Tibial artery (tissue), 4 donors: ENCODE measurements at regions of chr10 and their contacts with region 1.

Region 1: GRCh38 chr10:110269374-110270318 is 35.1 kb downstream of the SMNDC1 start:
- DNase-seq: peak in 1 of 2 donors; percentile 69
- H3K4me3 ChIP-seq: peak overlapping the region; percentile 4 to 27
- H3K27ac ChIP-seq: peak overlapping the region; percentile 74 to 85
- H3K4me1 ChIP-seq: peaks cover 0 to 100% (median 67%) of the 10 kb centered on the region in 4 donors
- H3K27me3 ChIP-seq: no peaks in the 10 kb centered on the region
- CTCF ChIP-seq: no peak

Region 2: GRCh38 chr10:110129490-110129889 is 140.2 kb before region 1 on chr10:
- intact Hi-C with region 1: no loop called
- DNase-seq: no peak
- H3K4me3 ChIP-seq: no peak overlapping the region
- H3K27ac ChIP-seq: no peak overlapping the region
- H3K4me1 ChIP-seq: no peaks in the 10 kb centered on the region
- H3K27me3 ChIP-seq: no peaks in the 10 kb centered on the region
- CTCF ChIP-seq: no peak

Region 3: DNA sequence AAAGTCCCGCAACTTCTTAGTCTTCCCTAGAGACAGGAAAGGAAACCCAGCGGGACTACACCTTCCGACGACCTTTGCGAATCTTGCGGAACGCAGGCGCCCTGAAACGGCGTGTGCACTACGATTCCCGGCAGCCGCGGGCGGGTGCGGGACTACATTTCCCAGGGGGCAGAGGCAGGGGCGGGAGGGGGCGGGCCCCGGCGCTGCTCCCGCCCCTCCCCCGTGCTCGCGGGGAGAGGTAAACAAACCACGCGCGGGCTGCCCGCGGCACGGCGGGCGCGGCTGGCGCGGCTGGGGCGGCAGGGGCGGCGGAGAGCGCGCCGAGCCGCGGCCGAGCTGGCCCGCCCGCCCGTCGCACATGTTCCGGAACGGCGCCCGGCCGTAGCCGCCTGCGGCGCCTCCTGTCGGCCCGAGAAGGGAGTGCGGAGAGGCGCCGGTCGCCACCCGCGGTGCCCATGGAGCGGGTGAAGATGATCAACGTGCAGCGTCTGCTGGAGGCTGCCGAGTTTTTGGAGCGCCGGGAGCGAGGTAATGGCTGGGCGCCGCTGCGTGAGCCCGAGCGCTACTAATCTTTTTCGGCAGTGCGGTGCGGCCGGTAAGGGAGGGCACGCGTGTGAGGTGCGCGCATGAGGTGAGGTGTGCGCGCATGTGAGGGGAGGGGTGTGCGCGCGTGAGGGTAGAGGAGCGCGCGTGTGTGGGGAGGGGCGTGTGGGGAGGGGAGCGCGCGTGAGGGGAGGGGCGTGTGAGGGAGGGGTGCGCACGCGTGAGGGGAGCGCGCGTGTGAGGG is 43.7 kb before region 1 on chr10:
- intact Hi-C with region 1: loop called (anchors 5 kb)
- DNase-seq: peak; percentile 89 to 96
- H3K4me3 ChIP-seq: peak overlapping the region; percentile 92 to 95
- H3K27ac ChIP-seq: peak overlapping the region; percentile 89 to 93
- H3K4me1 ChIP-seq: peaks cover 0 to 59% (median 42%) of the 10 kb centered on the region in 4 donors
- H3K27me3 ChIP-seq: no peaks in the 10 kb centered on the region
- CTCF ChIP-seq: peak; percentile 66 to 91